BJ (cell line): ENCODE measurements at regions of chr11 and their contacts with region 1.

Region 1: GRCh38 chr11:75388386-75389275 is 10.7 kb upstream of the RPS3 start:
- DNase-seq: no peak
- H3K4me3 ChIP-seq: no peak overlapping the region
- H3K27me3 ChIP-seq: peaks cover 9% of the 10 kb centered on the region
- CTCF ChIP-seq: peak; percentile 81

Region 2: GRCh38 chr11:75328426-75329277 is 60.0 kb before region 1 on chr11:
- CTCF ChIA-PET with region 1: interaction called, 186 read pairs
- POLR2A ChIA-PET with region 1: no interaction called
- DNase-seq: no peak
- H3K4me3 ChIP-seq: no peak overlapping the region
- H3K27me3 ChIP-seq: no peaks in the 10 kb centered on the region
- CTCF ChIP-seq: peak; percentile 88

Region 3: GRCh38 chr11:75371941-75372789 is 16.5 kb before region 1 on chr11:
- CTCF ChIA-PET with region 1: interaction called, 32 read pairs
- POLR2A ChIA-PET with region 1: interaction called, 5 read pairs
- DNase-seq: no peak
- H3K4me3 ChIP-seq: no peak overlapping the region
- H3K27me3 ChIP-seq: peaks cover 5% of the 10 kb centered on the region
- CTCF ChIP-seq: no peak

Region 4: DNA sequence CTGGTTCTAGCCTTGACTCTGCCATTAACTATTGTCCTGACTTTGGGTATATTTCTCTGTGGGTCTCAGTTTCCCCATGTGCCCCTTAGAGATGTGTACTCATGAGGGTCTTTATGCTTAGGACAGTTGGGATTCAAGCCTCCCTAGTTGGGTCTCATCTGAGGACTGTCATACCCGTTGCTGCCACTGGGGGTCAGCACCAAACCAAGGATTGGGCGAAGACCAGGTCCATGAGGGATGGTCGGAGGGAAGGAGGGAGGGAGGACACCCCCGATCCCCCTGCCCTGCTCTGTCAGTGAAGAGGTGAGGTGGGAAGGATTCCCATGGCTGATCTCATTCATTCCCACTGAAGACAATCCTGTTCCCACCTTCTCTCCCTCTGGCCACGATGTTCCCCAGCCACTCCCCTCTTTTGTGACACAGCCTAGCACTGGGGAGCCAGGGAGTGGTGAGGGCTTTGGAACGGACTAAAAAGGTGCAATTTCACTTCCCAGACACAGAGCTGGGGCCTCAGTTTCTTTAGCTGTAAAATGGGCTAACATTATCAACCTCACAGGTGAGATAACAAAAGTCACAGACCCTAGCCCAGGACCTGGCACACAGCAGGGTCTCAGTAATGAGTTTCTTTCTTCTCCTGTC is 56.8 kb after region 1 on chr11:
- CTCF ChIA-PET with region 1: interaction called, 29 read pairs
- POLR2A ChIA-PET with region 1: no interaction called
- DNase-seq: no peak
- H3K4me3 ChIP-seq: no peak overlapping the region
- H3K27me3 ChIP-seq: no peaks in the 10 kb centered on the region; the same call in 1 of the 2 replicates
- CTCF ChIP-seq: peak; percentile 93

Region 5: DNA sequence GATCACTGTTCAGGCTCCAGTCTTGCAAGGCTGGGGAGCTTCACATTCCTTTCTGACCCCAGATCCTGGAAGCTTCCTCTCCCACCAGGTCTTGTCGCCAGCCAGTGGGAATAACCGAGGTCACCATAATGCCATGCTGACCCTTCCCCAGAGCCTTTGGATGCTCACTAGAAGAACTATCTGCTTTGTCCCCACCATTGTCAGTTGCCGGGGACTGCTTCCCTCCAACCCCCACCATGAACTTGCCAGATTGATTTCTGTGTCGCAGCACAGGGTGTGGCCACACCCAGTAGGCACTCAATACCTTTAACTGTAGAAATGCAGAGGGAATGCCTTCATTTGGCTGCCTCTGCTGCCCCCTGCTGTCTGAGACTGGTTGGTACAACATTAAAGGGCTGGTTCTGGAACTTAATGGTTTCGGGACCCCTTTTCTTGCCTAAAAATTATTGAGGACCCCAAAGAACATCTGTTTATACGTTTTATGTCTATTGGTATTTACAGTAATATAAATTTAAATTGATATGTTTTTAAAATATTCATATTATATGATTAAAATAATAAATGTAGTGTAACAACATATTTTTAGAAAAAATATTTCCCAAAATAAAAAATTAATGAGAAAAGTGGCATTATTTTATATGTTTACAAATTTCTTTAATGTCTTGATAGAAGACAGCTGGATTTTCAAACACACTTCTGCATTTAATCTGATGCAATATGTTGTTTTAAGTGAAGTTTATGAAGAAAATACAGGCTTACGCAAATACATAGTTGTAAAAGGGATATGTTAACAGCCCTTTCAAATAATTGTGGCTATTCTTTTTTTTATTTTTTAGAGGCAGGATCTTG is 143.8 kb after region 1 on chr11:
- CTCF ChIA-PET with region 1: interaction called, 84 read pairs
- POLR2A ChIA-PET with region 1: no interaction called
- DNase-seq: no peak
- H3K4me3 ChIP-seq: no peak overlapping the region
- H3K27me3 ChIP-seq: peaks cover 7% of the 10 kb centered on the region; the same call in 1 of the 2 replicates
- CTCF ChIP-seq: peak; percentile 79